A673 (cell line): ENCODE measurements at regions of chr21 and their contacts with region 1.

Region 1: DNA sequence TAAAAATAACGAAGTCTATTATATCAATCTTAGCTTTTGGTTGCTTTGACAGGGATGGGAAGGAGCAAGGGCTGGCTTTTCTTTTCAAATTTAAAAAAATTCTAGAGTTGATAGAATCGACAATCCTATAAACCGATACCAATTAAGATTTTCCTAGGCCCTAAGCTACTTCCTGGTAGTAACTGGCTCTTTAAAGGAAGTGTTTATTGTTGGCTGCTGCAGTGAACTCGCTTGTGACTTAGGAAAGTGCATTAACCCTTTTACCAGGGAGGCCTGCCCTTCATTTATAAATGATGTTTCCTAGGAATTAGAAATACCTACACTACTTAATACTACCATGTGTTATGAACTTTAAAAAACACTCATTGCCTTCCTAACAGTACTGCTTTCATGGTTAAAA is 33.2 kb downstream of the ATP5PF start:
- DNase-seq: no peak
- H3K4me3 ChIP-seq: no peak overlapping the region
- H3K27ac ChIP-seq: no peak overlapping the region
- H3K4me1 ChIP-seq: no peaks in the 10 kb centered on the region
- H3K27me3 ChIP-seq: no peaks in the 10 kb centered on the region
- CTCF ChIP-seq: no peak

Region 2: DNA sequence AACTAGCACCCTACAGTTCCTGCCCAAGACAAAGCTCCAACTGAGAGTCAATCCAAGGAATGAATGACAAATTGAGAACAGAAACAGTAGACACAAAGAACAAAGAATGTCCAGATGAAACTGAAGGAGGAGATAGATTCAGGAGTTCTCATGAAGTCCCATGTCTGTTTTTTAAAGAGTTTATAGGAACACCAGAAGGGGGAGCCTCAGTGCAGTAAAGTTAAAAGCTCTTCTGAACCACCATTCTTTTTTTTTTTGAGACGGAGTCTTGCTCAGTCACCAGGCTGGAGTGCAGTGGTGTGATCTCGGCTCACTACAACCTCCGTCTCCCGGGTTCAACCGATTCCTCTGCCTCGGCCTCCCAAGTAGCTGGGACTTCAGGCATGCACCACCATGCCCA is 417.8 kb before region 1 on chr21:
- CTCF ChIA-PET with region 1: no interaction called
- POLR2A ChIA-PET with region 1: no interaction called
- intact Hi-C with region 1: no loop called
- DNase-seq: peak; percentile 51
- H3K4me3 ChIP-seq: no peak overlapping the region
- H3K27ac ChIP-seq: no peak overlapping the region
- H3K4me1 ChIP-seq: no peaks in the 10 kb centered on the region
- H3K27me3 ChIP-seq: no peaks in the 10 kb centered on the region
- CTCF ChIP-seq: peak; percentile 50

Region 3: GRCh38 chr21:25640943-25641292 is 60.6 kb before region 1 on chr21:
- CTCF ChIA-PET with region 1: interaction called, 19 read pairs
- POLR2A ChIA-PET with region 1: no interaction called
- intact Hi-C with region 1: no loop called
- DNase-seq: no peak
- H3K4me3 ChIP-seq: peak overlapping the region; percentile 67
- H3K27ac ChIP-seq: no peak overlapping the region
- H3K4me1 ChIP-seq: peaks cover 11% of the 10 kb centered on the region
- H3K27me3 ChIP-seq: no peaks in the 10 kb centered on the region
- CTCF ChIP-seq: no peak

Region 4: DNA sequence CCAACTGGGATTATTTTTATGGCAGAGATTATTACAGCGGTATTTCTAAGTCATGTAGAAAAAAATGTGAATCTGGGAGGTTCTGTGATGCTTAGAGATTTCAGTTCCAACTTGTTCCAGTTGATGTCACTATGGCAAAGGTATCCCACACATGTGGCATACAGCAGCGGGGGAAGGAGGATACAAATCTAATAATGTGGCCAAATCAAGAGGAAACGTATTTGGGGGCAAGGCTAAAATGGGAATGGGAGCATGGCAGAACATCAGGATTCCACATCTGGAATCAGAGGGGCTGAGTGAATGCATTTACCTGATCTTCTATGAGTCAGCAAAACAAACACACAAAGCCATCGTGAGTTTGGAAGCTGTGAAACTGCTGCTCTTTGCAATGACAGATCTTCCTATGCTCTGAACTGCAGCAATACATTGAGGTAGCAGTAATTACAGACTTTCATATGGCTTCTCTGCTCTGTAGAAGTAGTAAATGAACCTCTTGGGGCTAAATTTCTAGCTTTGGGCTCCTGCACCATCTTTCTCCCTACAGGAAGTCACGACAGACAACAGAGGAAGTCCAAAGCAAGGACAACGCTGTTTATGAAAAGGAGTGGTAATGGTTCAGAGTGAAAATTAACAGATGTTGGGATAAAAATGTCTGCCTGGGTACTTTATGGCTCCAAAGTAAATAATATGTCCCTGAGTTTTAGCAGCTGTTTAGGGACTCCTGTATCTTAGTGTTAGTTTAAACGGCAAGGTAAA is 88.8 kb after region 1 on chr21:
- CTCF ChIA-PET with region 1: no interaction called
- POLR2A ChIA-PET with region 1: no interaction called
- intact Hi-C with region 1: no loop called
- DNase-seq: peak; percentile 79
- H3K4me3 ChIP-seq: peak overlapping the region; percentile 15
- H3K27ac ChIP-seq: peak overlapping the region; percentile 46
- H3K4me1 ChIP-seq: peaks cover 8% of the 10 kb centered on the region
- H3K27me3 ChIP-seq: no peaks in the 10 kb centered on the region
- CTCF ChIP-seq: peak; percentile 66